HCT116 (cell line): ENCODE measurements at regions of chr19 and their contacts with region 1.

Region 1: DNA sequence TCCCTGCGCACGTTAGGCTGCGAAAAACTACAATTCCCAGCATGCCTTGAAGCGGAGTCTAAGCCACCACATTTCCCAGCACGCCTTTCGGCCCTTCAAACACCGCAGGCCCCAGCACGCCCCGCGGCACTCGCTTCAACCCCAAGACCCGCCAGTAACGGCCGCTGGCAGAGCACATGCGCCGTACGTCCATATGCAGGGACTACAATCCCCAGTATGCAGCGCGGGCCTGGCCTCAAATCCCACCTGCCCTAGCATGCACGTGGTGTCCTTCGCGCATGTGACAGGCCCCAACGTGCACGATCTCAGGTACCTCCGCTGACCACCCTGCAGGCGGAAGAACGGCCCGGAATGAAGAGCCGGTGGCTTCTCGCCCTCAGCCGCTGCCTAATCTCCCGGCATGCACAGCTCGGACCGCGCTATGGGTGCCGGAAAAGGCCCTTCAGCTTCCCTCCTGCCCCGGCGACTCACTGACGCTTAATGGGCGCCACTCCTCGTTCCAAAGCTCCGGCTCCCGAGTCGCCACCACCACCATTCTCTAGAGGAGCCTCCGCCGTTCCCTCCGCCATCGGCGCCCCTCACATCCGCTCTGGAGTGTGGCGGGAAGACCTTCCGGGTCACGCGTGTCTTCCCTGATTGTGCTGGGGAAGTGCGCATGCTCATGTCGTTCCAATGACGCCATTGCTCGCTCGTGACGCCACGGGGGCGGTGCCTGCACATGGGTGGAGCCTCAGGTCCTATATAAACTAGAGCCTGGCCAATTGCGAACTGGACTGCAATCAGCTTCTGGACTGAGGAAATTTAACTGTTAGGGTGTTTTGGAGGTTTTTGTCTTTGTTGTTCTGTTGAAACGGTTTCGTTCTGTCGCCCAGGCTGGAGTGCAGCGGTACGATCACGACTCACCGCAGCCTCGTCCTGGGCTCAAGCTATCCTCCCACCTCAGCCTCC is at the start of gene DUS3L:
- DNase-seq: peak; percentile 97
- ATAC-seq: peak; percentile 91
- H3K4me3 ChIP-seq: peak within 1 kb of the TSS; percentile 72 to 85
- H3K27ac ChIP-seq: peak within 1 kb of the TSS; percentile 96
- H3K4me1 ChIP-seq: peaks cover 9 to 22% of the 10 kb centered on the region in 2 experiments; a peak in 3 of 4 replicates
- H3K27me3 ChIP-seq: no peaks in the 10 kb centered on the region
- CTCF ChIP-seq: no peak
- POLR2A ChIP-seq: peak; percentile 97
- RAD21 ChIP-seq: no peak
- total RNA-seq, gene DUS3L: 78.1 TPM

Region 2: GRCh38 chr19:5680437-5681368 is 110.1 kb before region 1 on chr19 and contains the starts of genes HSD11B1L and MICOS13:
- CTCF ChIA-PET with region 1: no interaction called
- POLR2A ChIA-PET with region 1: no interaction called
- RAD21 ChIA-PET with region 1: no interaction called
- intact Hi-C with region 1: loop called (anchors 2 kb)
- DNase-seq: peak; percentile 97
- ATAC-seq: peak; percentile 96
- H3K4me3 ChIP-seq: peak within 1 kb of the TSS; percentile 84 to 99
- H3K27ac ChIP-seq: peak within 1 kb of the TSS; percentile 69
- H3K4me1 ChIP-seq: peaks cover 5 to 17% of the 10 kb centered on the region in 2 experiments; a peak in 2 of 4 replicates
- H3K27me3 ChIP-seq: no peaks in the 10 kb centered on the region
- CTCF ChIP-seq: no peak
- POLR2A ChIP-seq: peak; percentile 68
- RAD21 ChIP-seq: no peak
- total RNA-seq, gene HSD11B1L: 6.0 TPM
- total RNA-seq, gene MICOS13: 61.6 TPM

Region 3: GRCh38 chr19:5719961-5720790 is 70.7 kb before region 1 on chr19 and contains the starts of genes CATSPERD and LONP1:
- CTCF ChIA-PET with region 1: no interaction called
- POLR2A ChIA-PET with region 1: interaction called, 8 read pairs
- RAD21 ChIA-PET with region 1: no interaction called
- intact Hi-C with region 1: loop called (anchors 1 kb)
- DNase-seq: peak; percentile 97
- ATAC-seq: peak; percentile 92
- H3K4me3 ChIP-seq: peak within 1 kb of the TSS; percentile 99 to 100
- H3K27ac ChIP-seq: peak within 1 kb of the TSS; percentile 85
- H3K4me1 ChIP-seq: peaks cover 10 to 28% of the 10 kb centered on the region in 2 experiments
- H3K27me3 ChIP-seq: no peaks in the 10 kb centered on the region
- CTCF ChIP-seq: peak; percentile 62 to 92 (median 88)
- POLR2A ChIP-seq: peak; percentile 67
- RAD21 ChIP-seq: no peak
- total RNA-seq, gene CATSPERD: not detected
- total RNA-seq, gene LONP1: 180 TPM

Region 4: DNA sequence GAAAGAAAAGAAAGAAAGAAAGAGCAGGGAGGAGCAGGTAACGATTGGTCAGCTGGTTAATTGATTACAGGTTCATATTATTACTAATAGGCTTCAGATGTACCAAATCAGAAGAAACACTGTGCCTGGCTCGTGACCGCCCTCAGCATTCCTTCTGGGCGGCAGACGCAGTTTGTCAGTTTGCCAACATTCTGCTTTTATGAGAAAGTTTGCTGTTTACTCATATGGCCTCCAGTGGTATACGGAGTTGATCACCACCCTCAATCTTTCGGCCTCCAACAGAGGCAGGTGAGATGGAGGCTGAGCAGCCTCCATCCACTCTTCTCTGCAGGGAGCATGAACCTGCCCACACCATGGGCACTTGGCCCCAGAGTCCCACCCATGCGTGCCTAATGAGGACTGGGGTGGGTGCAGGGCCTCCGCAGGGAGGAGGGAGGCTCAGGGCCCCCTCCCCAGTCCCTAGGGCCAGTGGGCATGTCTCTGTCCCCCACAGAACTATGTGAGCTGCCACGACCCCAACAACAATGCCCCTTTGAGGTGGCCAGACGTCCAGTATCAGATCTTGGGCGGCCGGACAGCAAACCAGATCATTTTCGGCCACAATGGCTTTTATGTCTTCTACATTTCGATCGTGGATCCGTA is 15.1 kb before region 1 on chr19:
- CTCF ChIA-PET with region 1: interaction called, 20 read pairs
- POLR2A ChIA-PET with region 1: interaction called, 3 read pairs
- RAD21 ChIA-PET with region 1: interaction called in 1 of 2 experiments, 3 read pairs
- intact Hi-C with region 1: loop called (anchors 2 kb)
- DNase-seq: no peak
- ATAC-seq: no peak
- H3K4me3 ChIP-seq: no peak overlapping the region
- H3K27ac ChIP-seq: no peak overlapping the region
- H3K4me1 ChIP-seq: peaks cover 0 to 11% of the 10 kb centered on the region in 2 experiments; a peak in 3 of 4 replicates
- H3K27me3 ChIP-seq: no peaks in the 10 kb centered on the region
- CTCF ChIP-seq: no peak
- POLR2A ChIP-seq: no peak
- RAD21 ChIP-seq: no peak

Region 5: GRCh38 chr19:5839065-5840017 is 48.5 kb after region 1 on chr19 and contains the start of gene FUT6:
- CTCF ChIA-PET with region 1: no interaction called
- POLR2A ChIA-PET with region 1: no interaction called
- RAD21 ChIA-PET with region 1: no interaction called
- intact Hi-C with region 1: no loop called
- DNase-seq: no peak
- ATAC-seq: no peak; the same call in 1 of the 2 replicates
- H3K4me3 ChIP-seq: no peak within 1 kb of the TSS
- H3K27ac ChIP-seq: no peak within 1 kb of the TSS
- H3K4me1 ChIP-seq: peaks cover 9 to 18% of the 10 kb centered on the region in 2 experiments; a peak in 2 of 4 replicates
- H3K27me3 ChIP-seq: no peaks in the 10 kb centered on the region
- CTCF ChIP-seq: no peak
- POLR2A ChIP-seq: no peak
- RAD21 ChIP-seq: no peak
- total RNA-seq, gene FUT6: not detected